ENCODE measurements at regions of chr6 and their contacts with region 1.

Region 1: DNA sequence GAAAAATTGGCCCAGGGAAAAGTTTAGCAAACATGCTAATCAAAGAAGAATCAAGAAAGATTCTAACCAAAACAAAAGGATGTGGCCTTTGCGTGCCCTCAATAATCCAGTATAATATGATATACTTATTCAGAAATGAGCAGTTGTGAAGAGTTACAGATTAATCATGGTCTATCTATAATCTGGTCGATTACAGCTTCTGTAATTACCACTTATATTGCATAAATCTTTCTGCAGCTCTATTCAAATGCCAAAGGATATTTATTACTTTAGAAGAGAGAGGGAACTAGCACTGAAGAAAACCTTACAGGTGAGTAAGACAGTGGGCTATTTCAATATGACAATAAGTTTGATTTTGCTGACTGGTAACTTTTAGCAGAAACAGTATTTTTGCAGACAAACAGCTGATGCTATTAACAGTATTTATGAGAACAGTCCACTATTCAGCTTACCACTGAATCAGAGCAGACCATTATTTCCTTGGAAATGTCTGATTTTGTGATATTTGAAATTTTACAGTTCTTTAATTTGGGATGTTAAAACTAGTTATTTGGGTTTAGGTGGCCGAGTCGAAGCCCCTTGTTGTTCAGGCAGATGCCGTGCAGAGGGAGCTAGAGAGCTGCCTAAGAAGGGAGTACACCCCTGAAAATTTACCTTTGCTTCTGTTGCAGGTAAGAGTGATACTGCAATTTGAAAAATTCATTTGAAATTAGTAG is 92.2 kb downstream of the CEP57L1 start:
- DNase-seq: peak; percentile 76
- H3K4me3 ChIP-seq: no peak overlapping the region
- H3K27ac ChIP-seq: no peak overlapping the region
- H3K4me1 ChIP-seq: no peaks in the 10 kb centered on the region
- H3K27me3 ChIP-seq: no peaks in the 10 kb centered on the region
- CTCF ChIP-seq: peak; percentile 98

Region 2: GRCh38 chr6:109202409-109203284 is 15.1 kb after region 1 on chr6:
- intact Hi-C with region 1: no loop called
- DNase-seq: no peak
- H3K4me3 ChIP-seq: no peak overlapping the region
- H3K27ac ChIP-seq: no peak overlapping the region
- H3K4me1 ChIP-seq: no peaks in the 10 kb centered on the region
- H3K27me3 ChIP-seq: no peaks in the 10 kb centered on the region
- CTCF ChIP-seq: no peak

Region 3: DNA sequence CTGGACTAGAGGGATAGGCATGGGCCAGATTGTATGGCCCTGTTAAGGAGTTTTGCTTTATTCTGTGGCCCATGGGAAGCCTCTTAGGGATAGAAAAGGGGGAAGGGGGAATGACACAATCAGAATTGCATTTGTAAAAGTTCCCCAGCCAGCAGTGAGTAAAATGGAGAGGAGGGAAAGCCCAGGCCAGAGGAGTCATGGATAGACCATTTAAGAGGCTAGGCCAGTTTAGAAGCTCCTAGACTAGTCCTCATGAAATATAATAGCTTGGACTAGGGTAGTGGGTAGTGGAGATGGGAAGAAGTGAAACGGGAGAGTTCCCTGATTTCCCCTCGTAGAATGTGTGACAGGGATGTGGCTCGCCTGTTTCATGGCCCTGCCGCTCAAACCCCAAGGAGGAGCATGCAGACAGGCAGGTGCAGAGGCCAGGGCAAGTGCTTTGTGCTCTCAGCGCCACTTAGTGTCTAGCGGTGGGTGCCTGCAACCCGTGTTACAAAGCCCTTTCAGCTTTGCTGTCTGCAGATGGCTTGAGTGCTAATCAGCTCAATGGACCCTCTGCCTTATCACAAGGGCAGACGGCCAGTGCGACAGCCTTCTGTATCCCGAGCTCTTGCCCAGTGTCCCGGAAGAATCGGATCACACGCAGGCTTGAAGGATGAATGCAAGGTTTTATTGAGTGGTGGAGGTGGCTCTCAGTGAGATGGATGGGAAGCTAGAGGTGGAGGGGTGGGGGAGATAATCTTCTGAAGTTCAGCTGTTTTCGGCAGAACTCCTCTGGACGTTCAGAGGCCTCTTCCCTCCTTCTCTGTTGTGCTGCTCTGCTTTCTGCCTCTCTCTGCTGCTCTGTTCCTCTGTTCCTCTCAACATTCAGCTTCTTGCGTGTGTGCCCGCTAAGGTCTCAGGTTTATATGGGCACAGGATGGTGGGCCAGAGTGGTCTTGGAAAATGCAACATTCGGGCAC is 48.8 kb after region 1 on chr6:
- intact Hi-C with region 1: loop called (anchors 5 kb)
- DNase-seq: no peak
- H3K4me3 ChIP-seq: no peak overlapping the region
- H3K27ac ChIP-seq: peak overlapping the region; percentile 63
- H3K4me1 ChIP-seq: peaks cover 8% of the 10 kb centered on the region
- H3K27me3 ChIP-seq: no peaks in the 10 kb centered on the region
- CTCF ChIP-seq: no peak

Region 4: GRCh38 chr6:109382576-109383437 is 195.2 kb after region 1 on chr6:
- intact Hi-C with region 1: loop called (anchors 5 kb)
- DNase-seq: peak; percentile 94
- H3K4me3 ChIP-seq: peak overlapping the region; percentile 81
- H3K27ac ChIP-seq: peak overlapping the region; percentile 100
- H3K4me1 ChIP-seq: peaks cover 5% of the 10 kb centered on the region
- H3K27me3 ChIP-seq: no peaks in the 10 kb centered on the region
- CTCF ChIP-seq: no peak

Measured in colonic mucosa (tissue), 4 donors.